Activated CD4-positive, alpha-beta memory T cell treated with anti-CD3 and anti-CD28 coated beads, Interleukin-2, amount 10 ng/mL, durations not matched to agents 7 days and 5 days (primary cell): ENCODE measurements at regions of chr19 and their contacts with region 1.

Region 1: DNA sequence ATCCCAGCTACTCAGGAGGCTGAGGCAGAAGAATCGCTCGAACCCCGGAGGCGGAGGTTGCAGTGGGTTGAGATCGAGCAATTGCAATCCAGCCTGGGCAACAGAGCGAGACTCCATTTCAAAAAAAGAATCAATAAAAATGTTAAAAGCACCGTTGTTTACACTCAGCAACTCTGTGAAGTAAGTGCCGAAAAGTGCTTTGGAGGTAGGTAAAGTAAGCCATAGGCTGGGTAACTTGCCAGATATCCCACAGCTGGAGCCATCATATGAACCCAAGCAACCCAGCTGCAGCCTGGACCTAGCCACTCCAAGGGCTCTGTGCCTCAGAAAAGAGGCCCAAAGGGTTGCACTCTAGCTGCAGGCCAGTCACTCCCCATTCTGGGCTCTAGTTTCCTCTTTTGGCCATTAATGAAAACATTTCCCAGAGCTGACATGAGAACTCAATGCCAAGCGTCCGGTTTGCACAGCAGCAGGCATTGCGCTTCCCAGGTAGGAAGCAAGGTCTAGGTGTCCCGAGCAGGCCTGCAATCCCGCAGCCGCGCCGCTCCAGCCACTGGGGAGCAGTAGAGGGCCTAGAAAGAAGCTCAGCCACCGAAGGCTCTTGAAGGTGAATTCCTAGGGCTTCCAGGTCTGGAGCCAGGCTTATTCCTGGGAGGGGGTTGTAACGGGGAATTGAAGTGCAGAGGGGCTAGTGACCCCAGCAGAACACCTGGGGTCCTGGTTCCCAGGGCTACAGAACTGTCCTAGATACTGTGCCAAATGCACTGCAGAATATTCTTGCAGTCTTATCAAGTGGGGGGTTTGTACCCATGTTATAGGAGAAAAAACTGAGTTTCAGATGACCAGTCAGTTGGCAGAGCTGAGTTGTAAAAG is 4.1 kb upstream of the CD79A start:
- DNase-seq: peak; percentile 70
- H3K4me3 Mint-ChIP-seq: no peak overlapping the region
- H3K27ac Mint-ChIP-seq: peak overlapping the region; percentile 93
- H3K4me1 Mint-ChIP-seq: peaks cover 91% of the 10 kb centered on the region
- H3K27me3 Mint-ChIP-seq: no peaks in the 10 kb centered on the region

Region 2: GRCh38 chr19:41883821-41884733 is 11.1 kb after region 1 on chr19:
- CTCF ChIA-PET with region 1: interaction called, 95 read pairs
- POLR2A ChIA-PET with region 1: interaction called, 384 read pairs
- DNase-seq: peak; percentile 94
- H3K4me3 Mint-ChIP-seq: peak overlapping the region; percentile 85
- H3K27ac Mint-ChIP-seq: peak overlapping the region; percentile 93
- H3K4me1 Mint-ChIP-seq: peaks cover 55% of the 10 kb centered on the region
- H3K27me3 Mint-ChIP-seq: no peaks in the 10 kb centered on the region

Region 3: GRCh38 chr19:41911889-41912731 is 39.1 kb after region 1 on chr19:
- CTCF ChIA-PET with region 1: no interaction called
- POLR2A ChIA-PET with region 1: interaction called, 26 read pairs
- DNase-seq: no peak
- H3K4me3 Mint-ChIP-seq: no peak overlapping the region
- H3K27ac Mint-ChIP-seq: no peak overlapping the region
- H3K4me1 Mint-ChIP-seq: peaks cover 15% of the 10 kb centered on the region
- H3K27me3 Mint-ChIP-seq: peaks cover 39% of the 10 kb centered on the region

Region 4: GRCh38 chr19:41945135-41945766 is 72.2 kb after region 1 on chr19:
- CTCF ChIA-PET with region 1: interaction called, 33 read pairs
- POLR2A ChIA-PET with region 1: interaction called, 34 read pairs
- DNase-seq: peak; percentile 87
- H3K4me3 Mint-ChIP-seq: peak overlapping the region; percentile 4
- H3K27ac Mint-ChIP-seq: peak overlapping the region; percentile 79
- H3K4me1 Mint-ChIP-seq: peaks cover 44% of the 10 kb centered on the region
- H3K27me3 Mint-ChIP-seq: peaks cover 18% of the 10 kb centered on the region

Region 5: DNA sequence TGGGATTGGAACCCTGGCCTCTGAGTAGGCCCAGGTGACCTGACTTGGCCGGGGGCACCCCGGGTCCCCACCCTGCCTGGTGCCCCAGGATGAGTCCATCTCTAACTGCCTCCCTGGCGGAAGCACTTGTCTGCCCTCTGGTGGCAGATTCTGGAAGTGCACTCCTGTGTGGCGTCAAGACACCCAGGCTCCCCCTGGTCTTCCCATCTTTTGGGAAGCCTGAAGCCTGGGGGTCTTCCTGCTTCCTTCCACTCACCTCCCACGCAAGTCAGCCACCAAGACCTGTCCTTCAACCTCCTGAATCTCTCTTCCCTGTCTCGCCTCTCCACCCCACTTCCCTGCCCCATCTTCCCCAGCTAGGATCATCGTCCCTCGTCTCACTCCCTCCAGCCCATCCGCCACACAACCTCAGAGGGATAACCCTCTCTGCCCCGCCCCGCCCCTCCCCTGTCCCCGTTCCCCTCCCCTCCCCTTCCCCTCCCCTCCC is 78.7 kb after region 1 on chr19:
- CTCF ChIA-PET with region 1: interaction called, 33 read pairs
- POLR2A ChIA-PET with region 1: interaction called, 34 read pairs
- DNase-seq: peak; percentile 88
- H3K4me3 Mint-ChIP-seq: no peak overlapping the region
- H3K27ac Mint-ChIP-seq: peak overlapping the region; percentile 19
- H3K4me1 Mint-ChIP-seq: peaks cover 16% of the 10 kb centered on the region
- H3K27me3 Mint-ChIP-seq: no peaks in the 10 kb centered on the region

Region 6: DNA sequence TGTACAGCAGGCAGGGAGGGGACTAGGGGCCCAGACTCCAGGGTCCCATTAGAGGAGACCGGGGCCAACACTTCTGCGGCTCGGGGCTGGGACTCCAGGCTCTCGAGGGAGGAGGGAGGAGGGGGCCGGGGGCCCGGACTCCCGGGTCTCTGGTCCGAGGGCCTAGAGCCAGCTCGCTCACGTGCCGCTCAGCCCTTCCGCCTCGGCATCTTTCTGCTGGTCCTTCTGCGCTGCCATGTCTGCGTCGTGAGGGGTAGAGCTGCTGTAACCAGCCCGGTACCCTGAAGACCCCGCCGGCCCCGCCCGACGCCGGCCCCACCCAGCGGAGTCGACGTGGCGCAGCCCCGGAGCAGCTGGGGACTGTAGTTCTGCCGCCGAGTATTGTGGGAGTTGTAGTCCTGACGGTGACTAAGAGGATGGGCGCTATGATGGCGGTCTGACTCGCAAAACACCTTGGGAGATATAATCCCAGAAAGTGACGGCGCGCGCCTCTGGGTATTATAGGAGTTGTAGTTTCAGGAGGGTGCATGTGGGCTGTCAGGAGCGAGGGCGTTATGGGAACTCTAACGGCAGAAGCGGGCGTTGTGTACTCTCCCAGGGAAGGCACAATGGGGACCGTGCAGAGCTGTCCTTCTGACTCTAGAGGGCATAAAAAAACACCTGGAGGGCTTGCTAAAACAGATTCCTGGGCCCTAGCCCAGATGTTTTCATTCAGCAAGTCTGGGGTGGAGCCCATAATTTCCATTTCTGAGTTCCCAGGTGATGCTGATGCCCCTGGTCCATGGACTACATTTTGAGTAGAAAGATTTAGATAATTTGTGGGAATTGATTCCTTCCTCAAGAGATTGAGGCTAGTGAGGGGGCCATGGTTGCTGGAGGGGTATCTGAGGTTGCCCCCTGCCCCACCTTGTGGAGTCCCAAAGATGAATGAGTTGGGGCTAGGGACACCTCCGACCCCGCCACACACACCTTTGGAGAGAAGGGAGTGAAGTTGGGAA is 86.3 kb after region 1 on chr19 and contains the start of gene RABAC1:
- CTCF ChIA-PET with region 1: interaction called, 9 read pairs
- POLR2A ChIA-PET with region 1: interaction called, 20 read pairs
- DNase-seq: peak; percentile 92
- H3K4me3 Mint-ChIP-seq: peak within 1 kb of the TSS; percentile 92
- H3K27ac Mint-ChIP-seq: peak within 1 kb of the TSS; percentile 79
- H3K4me1 Mint-ChIP-seq: peaks cover 21% of the 10 kb centered on the region
- H3K27me3 Mint-ChIP-seq: no peaks in the 10 kb centered on the region
- total RNA-seq, gene RABAC1: 97.2 to 105 TPM